SK-N-SH (cell line): ENCODE measurements at regions of chr4 and their contacts with region 1.

Region 1: GRCh38 chr4:127965062-127965802 is at the starts of genes ABHD18 and MFSD8:
- DNase-seq: peak; percentile 95
- H3K4me3 ChIP-seq: peak within 1 kb of the TSS; percentile 99
- H3K27ac ChIP-seq: peak within 1 kb of the TSS; percentile 87 to 90
- H3K4me1 ChIP-seq: peaks cover 0 to 3% of the 10 kb centered on the region in 2 experiments; a peak in 2 of 4 replicates
- H3K27me3 ChIP-seq: no peaks in the 10 kb centered on the region
- CTCF ChIP-seq: peak; percentile 59
- EP300 ChIP-seq: no peak
- RAD21 ChIP-seq: peak; percentile 35; the same call in 1 of the 2 replicates
- polyA plus RNA-seq, gene ABHD18: 2.0 and 2.1 TPM in 2 replicates
- polyA plus RNA-seq, gene MFSD8: 7.5 and 12.8 TPM in 2 replicates

Region 2: GRCh38 chr4:127880764-127881562 is 84.3 kb before region 1 on chr4 and contains the start of gene PLK4:
- CTCF ChIA-PET with region 1: interaction called, 6 read pairs
- POLR2A ChIA-PET with region 1: interaction called, 12 read pairs
- DNase-seq: peak; percentile 94
- H3K4me3 ChIP-seq: peak within 1 kb of the TSS; percentile 76 to 99
- H3K27ac ChIP-seq: peak within 1 kb of the TSS; percentile 82 to 83
- H3K4me1 ChIP-seq: peaks cover 0 to 5% of the 10 kb centered on the region in 2 experiments; a peak in 3 of 4 replicates
- H3K27me3 ChIP-seq: no peaks in the 10 kb centered on the region
- CTCF ChIP-seq: no peak
- EP300 ChIP-seq: no peak
- RAD21 ChIP-seq: no peak
- polyA plus RNA-seq, gene PLK4: 10.3 and 10.5 TPM in 2 replicates

Region 3: GRCh38 chr4:128060699-128061565 is 95.7 kb after region 1 on chr4 and contains the start of gene LARP1B:
- CTCF ChIA-PET with region 1: no interaction called
- POLR2A ChIA-PET with region 1: interaction called, 26 read pairs
- DNase-seq: peak; percentile 98
- H3K4me3 ChIP-seq: peak within 1 kb of the TSS; percentile 70 to 94
- H3K27ac ChIP-seq: peak within 1 kb of the TSS; percentile 89 to 94
- H3K4me1 ChIP-seq: no peaks in the 10 kb centered on the region; a peak in 1 of 4 replicates
- H3K27me3 ChIP-seq: no peaks in the 10 kb centered on the region
- CTCF ChIP-seq: no peak
- EP300 ChIP-seq: no peak
- RAD21 ChIP-seq: no peak
- polyA plus RNA-seq, gene LARP1B: 4.8 and 6.4 TPM in 2 replicates

Region 4: GRCh38 chr4:128177498-128177897 is 212.3 kb after region 1 on chr4:
- CTCF ChIA-PET with region 1: no interaction called
- POLR2A ChIA-PET with region 1: no interaction called
- DNase-seq: no peak
- H3K4me3 ChIP-seq: no peak overlapping the region
- H3K27ac ChIP-seq: no peak overlapping the region
- H3K4me1 ChIP-seq: no peaks in the 10 kb centered on the region
- H3K27me3 ChIP-seq: no peaks in the 10 kb centered on the region
- CTCF ChIP-seq: no peak
- EP300 ChIP-seq: no peak
- RAD21 ChIP-seq: no peak